A673 (cell line): ENCODE measurements at regions of chr1 and their contacts with region 1.

Region 1: GRCh38 chr1:172826096-172826743 is 167.3 kb downstream of the FASLG start:
- DNase-seq: peak; percentile 85
- H3K4me3 ChIP-seq: no peak overlapping the region
- H3K27ac ChIP-seq: no peak overlapping the region
- H3K4me1 ChIP-seq: peaks cover 13% of the 10 kb centered on the region
- H3K27me3 ChIP-seq: no peaks in the 10 kb centered on the region
- CTCF ChIP-seq: peak; percentile 75

Region 2: GRCh38 chr1:172745014-172745413 is 81.2 kb before region 1 on chr1:
- CTCF ChIA-PET with region 1: no interaction called
- POLR2A ChIA-PET with region 1: no interaction called
- intact Hi-C with region 1: loop called (anchors 1 kb)
- DNase-seq: peak; percentile 70
- H3K4me3 ChIP-seq: no peak overlapping the region
- H3K27ac ChIP-seq: no peak overlapping the region
- H3K4me1 ChIP-seq: no peaks in the 10 kb centered on the region
- H3K27me3 ChIP-seq: no peaks in the 10 kb centered on the region
- CTCF ChIP-seq: peak; percentile 71

Region 3: GRCh38 chr1:172956871-172957270 is 130.7 kb after region 1 on chr1:
- CTCF ChIA-PET with region 1: no interaction called
- POLR2A ChIA-PET with region 1: no interaction called
- intact Hi-C with region 1: loop called (anchors 2 kb)
- DNase-seq: no peak
- H3K4me3 ChIP-seq: no peak overlapping the region
- H3K27ac ChIP-seq: no peak overlapping the region
- H3K4me1 ChIP-seq: peaks cover 59% of the 10 kb centered on the region
- H3K27me3 ChIP-seq: no peaks in the 10 kb centered on the region
- CTCF ChIP-seq: no peak

Region 4: GRCh38 chr1:173095632-173096031 is 269.4 kb after region 1 on chr1:
- CTCF ChIA-PET with region 1: no interaction called
- POLR2A ChIA-PET with region 1: no interaction called
- intact Hi-C with region 1: no loop called
- DNase-seq: no peak
- H3K4me3 ChIP-seq: no peak overlapping the region
- H3K27ac ChIP-seq: no peak overlapping the region
- H3K4me1 ChIP-seq: no peaks in the 10 kb centered on the region
- H3K27me3 ChIP-seq: peaks cover 14% of the 10 kb centered on the region
- CTCF ChIP-seq: no peak

Region 5: GRCh38 chr1:173122958-173123852 is 297.0 kb after region 1 on chr1:
- CTCF ChIA-PET with region 1: interaction called, 3 read pairs
- POLR2A ChIA-PET with region 1: no interaction called
- intact Hi-C with region 1: loop called (anchors 5 kb)
- DNase-seq: peak; percentile 85
- H3K4me3 ChIP-seq: peak overlapping the region; percentile 7
- H3K27ac ChIP-seq: peak overlapping the region; percentile 63
- H3K4me1 ChIP-seq: peaks cover 16% of the 10 kb centered on the region
- H3K27me3 ChIP-seq: no peaks in the 10 kb centered on the region
- CTCF ChIP-seq: no peak

Region 6: GRCh38 chr1:173202430-173203145 is 376.4 kb after region 1 on chr1:
- CTCF ChIA-PET with region 1: interaction called, 43 read pairs
- POLR2A ChIA-PET with region 1: no interaction called
- intact Hi-C with region 1: loop called (anchors 1 kb)
- DNase-seq: peak; percentile 69
- H3K4me3 ChIP-seq: no peak overlapping the region
- H3K27ac ChIP-seq: no peak overlapping the region
- H3K4me1 ChIP-seq: peaks cover 15% of the 10 kb centered on the region
- H3K27me3 ChIP-seq: no peaks in the 10 kb centered on the region
- CTCF ChIP-seq: peak; percentile 74

Region 7: GRCh38 chr1:173409613-173410012 is 583.4 kb after region 1 on chr1:
- CTCF ChIA-PET with region 1: no interaction called
- POLR2A ChIA-PET with region 1: no interaction called
- intact Hi-C with region 1: loop called (anchors 10 kb)
- DNase-seq: no peak
- H3K4me3 ChIP-seq: no peak overlapping the region
- H3K27ac ChIP-seq: no peak overlapping the region
- H3K4me1 ChIP-seq: no peaks in the 10 kb centered on the region
- H3K27me3 ChIP-seq: no peaks in the 10 kb centered on the region
- CTCF ChIP-seq: no peak